Panc1 (cell line): ENCODE measurements at regions of chr3 and their contacts with region 1.

Region 1: GRCh38 chr3:114721864-114722263 is 425.2 kb downstream of the ZBTB20 start:
- DNase-seq: no peak
- ATAC-seq: no peak
- H3K4me3 ChIP-seq: no peak overlapping the region
- H3K27ac ChIP-seq: no peak overlapping the region
- H3K4me1 ChIP-seq: no peaks in the 10 kb centered on the region
- H3K27me3 ChIP-seq: no peaks in the 10 kb centered on the region
- CTCF ChIP-seq: no peak

Region 2: DNA sequence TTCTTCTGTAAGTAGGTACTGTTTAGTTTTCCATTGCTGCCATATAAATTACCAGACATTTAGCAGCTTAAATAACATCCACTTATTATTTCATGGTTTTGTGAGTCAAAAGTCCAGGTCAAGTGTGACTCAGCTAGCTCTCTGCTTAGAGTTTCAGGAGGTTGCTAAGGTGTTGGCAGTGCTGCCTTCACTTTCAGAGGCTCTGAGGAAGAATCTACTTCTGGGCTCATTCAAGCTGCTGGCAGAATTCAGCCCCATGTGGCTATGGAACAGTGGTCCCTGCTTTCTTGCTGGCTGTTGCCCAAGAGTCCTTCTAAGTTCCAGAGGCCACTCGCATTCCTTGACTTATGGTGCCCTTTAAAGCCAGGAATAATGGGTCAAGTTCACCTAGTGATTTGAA is 1285.1 kb before region 1 on chr3:
- CTCF ChIA-PET with region 1: no interaction called
- POLR2A ChIA-PET with region 1: no interaction called
- in situ Hi-C with region 1: no loop called
- intact Hi-C with region 1: no loop called
- DNase-seq: no peak
- ATAC-seq: no peak
- H3K4me3 ChIP-seq: no peak overlapping the region
- H3K27ac ChIP-seq: no peak overlapping the region
- H3K4me1 ChIP-seq: no peaks in the 10 kb centered on the region
- H3K27me3 ChIP-seq: no peaks in the 10 kb centered on the region
- CTCF ChIP-seq: no peak

Region 3: GRCh38 chr3:114308830-114309229 is 413.0 kb before region 1 on chr3:
- CTCF ChIA-PET with region 1: no interaction called
- POLR2A ChIA-PET with region 1: no interaction called
- in situ Hi-C with region 1: no loop called
- intact Hi-C with region 1: no loop called
- DNase-seq: no peak
- ATAC-seq: no peak
- H3K4me3 ChIP-seq: no peak overlapping the region
- H3K27ac ChIP-seq: no peak overlapping the region
- H3K4me1 ChIP-seq: no peaks in the 10 kb centered on the region
- H3K27me3 ChIP-seq: no peaks in the 10 kb centered on the region
- CTCF ChIP-seq: no peak

Region 4: DNA sequence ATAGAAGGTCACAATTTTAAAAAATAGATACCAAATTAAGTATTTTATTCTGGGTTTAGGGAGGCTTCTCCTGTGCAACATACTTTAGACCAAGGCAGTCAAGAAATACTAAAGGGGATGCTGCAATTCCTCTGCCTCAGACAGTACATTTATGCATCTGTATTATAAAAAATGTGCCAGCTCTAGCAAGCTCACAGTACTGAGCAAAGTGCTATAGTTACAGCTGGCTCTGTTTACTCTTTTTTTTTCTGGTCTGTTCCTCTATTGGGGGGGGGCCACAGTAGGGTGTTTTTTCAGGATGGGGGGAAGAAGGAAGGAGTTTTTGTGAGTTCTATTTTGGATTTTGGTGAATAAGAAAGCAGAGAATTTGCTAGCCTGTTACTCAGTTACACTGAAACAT is 243.1 kb before region 1 on chr3:
- CTCF ChIA-PET with region 1: no interaction called
- POLR2A ChIA-PET with region 1: no interaction called
- in situ Hi-C with region 1: no loop called
- intact Hi-C with region 1: loop called (anchors 10 kb)
- DNase-seq: no peak
- ATAC-seq: no peak
- H3K4me3 ChIP-seq: no peak overlapping the region
- H3K27ac ChIP-seq: no peak overlapping the region
- H3K4me1 ChIP-seq: no peaks in the 10 kb centered on the region
- H3K27me3 ChIP-seq: no peaks in the 10 kb centered on the region
- CTCF ChIP-seq: no peak

Region 5: DNA sequence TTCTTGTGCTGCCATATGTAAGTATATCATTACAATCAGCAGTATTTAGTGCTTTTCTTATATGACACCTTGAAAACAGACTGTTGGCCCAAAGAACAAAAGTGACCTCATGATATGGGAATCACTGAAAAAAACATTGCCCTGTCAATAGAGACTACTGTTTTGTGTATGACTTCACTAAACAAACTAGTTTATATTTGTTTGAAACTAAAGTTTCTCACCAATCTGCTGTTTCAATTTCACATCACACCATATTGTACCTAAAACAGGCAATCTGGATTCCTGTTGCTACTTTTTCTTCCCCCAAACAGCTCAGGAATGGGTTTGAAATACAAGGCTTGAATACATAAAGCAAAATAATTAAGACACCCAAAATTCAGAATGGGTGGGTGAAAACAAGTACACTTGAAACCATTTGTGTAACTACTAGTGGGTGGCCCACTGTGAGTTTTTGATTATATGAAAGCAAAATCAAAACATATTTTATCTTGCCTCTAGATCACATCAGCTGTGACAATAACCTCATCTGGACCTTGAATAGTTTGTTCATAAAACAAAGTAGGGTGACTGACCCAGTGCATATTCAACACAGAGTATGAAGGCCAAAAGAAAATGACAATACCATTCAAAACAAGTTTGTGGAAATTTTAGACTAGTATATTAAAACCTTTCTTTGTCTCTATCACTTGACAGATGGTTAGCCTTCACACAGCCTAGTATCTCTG is 419.3 kb after region 1 on chr3:
- CTCF ChIA-PET with region 1: no interaction called
- POLR2A ChIA-PET with region 1: no interaction called
- in situ Hi-C with region 1: no loop called
- intact Hi-C with region 1: no loop called
- DNase-seq: no peak
- ATAC-seq: no peak
- H3K4me3 ChIP-seq: no peak overlapping the region
- H3K27ac ChIP-seq: no peak overlapping the region
- H3K4me1 ChIP-seq: peaks cover 6% of the 10 kb centered on the region; the same call in 1 of the 2 replicates
- H3K27me3 ChIP-seq: no peaks in the 10 kb centered on the region
- CTCF ChIP-seq: no peak

Region 6: GRCh38 chr3:115436767-115437301 is 715.0 kb after region 1 on chr3:
- CTCF ChIA-PET with region 1: no interaction called
- POLR2A ChIA-PET with region 1: no interaction called
- in situ Hi-C with region 1: no loop called
- intact Hi-C with region 1: no loop called
- DNase-seq: no peak
- ATAC-seq: no peak
- H3K4me3 ChIP-seq: no peak overlapping the region
- H3K27ac ChIP-seq: no peak overlapping the region
- H3K4me1 ChIP-seq: no peaks in the 10 kb centered on the region
- H3K27me3 ChIP-seq: no peaks in the 10 kb centered on the region
- CTCF ChIP-seq: no peak